Esophagus squamous epithelium (tissue), 5 donors: ENCODE measurements at regions of chr12 and their contacts with region 1.

Region 1: DNA sequence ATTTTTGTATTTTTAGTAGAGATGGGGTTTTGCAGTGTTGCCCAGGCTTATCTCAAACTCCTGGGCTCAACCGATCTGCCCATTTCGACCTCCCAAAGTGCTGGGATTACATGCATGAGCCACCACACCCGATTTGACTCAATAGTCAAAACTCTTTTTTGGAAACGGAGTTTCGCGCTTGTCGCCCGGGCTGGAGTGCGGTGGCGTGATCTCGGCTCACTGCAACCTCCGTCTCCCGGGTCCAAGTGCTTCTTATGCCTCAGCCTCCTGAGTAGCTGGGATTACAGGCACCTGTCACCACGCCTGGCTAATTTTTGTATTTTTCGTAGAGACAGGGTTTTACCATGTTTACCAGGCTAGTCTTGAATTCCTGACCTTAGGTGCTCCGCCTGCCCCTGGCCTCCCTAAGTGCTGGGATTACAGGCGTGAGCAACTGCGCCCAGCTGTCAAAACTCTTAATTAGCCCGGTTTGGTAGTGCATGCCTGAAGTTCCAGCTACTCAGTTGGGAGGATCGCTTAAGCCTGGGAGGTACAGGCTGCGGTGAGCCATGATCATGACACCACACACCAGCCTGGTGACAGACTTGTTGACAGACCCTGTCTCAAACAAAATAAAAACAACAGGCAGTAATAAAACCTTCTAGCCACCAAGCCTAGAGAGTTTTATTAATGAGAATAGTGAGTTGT is 12.4 kb downstream of the MED21 start:
- DNase-seq: no peak
- H3K4me3 ChIP-seq: no peak overlapping the region
- H3K27ac ChIP-seq: no peak overlapping the region
- H3K4me1 ChIP-seq: no peaks in the 10 kb centered on the region
- H3K27me3 ChIP-seq: no peaks in the 10 kb centered on the region
- CTCF ChIP-seq: no peak
- POLR2A ChIP-seq: no peak

Region 2: DNA sequence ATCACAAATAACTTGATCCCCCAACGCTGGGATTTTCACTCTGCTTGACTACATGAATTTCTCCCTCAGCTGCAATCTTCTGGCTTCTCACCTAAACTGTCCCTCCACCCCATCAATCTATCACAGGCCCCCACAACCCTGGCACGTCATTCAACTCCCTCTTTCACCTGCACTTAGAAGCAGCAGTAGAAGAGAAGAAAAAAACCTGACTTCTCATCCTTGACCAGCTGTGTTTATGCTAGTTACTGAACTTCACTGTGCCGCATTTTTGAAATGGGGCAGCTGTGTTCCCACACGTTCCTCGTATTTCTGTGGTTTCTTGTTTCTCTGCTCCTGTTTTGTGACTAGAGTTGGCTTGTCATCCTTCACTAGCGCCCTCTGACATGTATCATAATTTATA is 236.7 kb before region 1 on chr12:
- intact Hi-C with region 1: no loop called
- DNase-seq: no peak
- H3K4me3 ChIP-seq: no peak overlapping the region
- H3K27ac ChIP-seq: peak overlapping the region in 3 of 4 donors; percentile 17 to 20 (median 17)
- H3K4me1 ChIP-seq: peaks cover 0 to 32% (median 5%) of the 10 kb centered on the region in 3 donors
- H3K27me3 ChIP-seq: no peaks in the 10 kb centered on the region
- CTCF ChIP-seq: no peak
- POLR2A ChIP-seq: no peak

Region 3: GRCh38 chr12:26884765-26885576 is 149.8 kb before region 1 on chr12:
- intact Hi-C with region 1: no loop called
- DNase-seq: peak; percentile 15
- H3K4me3 ChIP-seq: peak overlapping the region in 1 of 4 donors; percentile 24
- H3K27ac ChIP-seq: peak overlapping the region in 1 of 4 donors; percentile 66
- H3K4me1 ChIP-seq: peaks cover 4 to 11% (median 4%) of the 10 kb centered on the region in 3 donors
- H3K27me3 ChIP-seq: no peaks in the 10 kb centered on the region
- CTCF ChIP-seq: peak; percentile 87 to 97 (median 96)
- POLR2A ChIP-seq: no peak

Region 4: DNA sequence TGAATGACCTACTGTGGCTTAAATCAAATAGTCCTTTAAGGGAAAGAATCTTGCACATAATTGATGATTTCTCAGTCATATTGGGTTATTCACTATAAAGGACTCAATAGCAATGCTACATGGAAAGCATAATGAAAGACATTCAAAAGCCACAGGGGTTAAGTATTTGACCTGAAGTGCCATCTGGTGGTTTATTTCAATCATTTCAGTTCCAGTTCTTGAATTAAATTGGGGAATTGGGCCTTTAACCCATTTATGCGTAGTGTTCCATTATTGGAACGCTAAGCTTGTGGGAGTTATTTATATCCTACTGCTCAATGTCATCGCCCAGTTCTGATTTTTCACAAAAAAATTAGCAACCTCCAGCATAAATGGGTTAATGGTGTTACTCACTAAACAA is 88.9 kb after region 1 on chr12:
- intact Hi-C with region 1: loop called (anchors 10 kb)
- DNase-seq: no peak
- H3K4me3 ChIP-seq: no peak overlapping the region
- H3K27ac ChIP-seq: no peak overlapping the region
- H3K4me1 ChIP-seq: peaks cover 0 to 11% (median 0%) of the 10 kb centered on the region in 3 donors
- H3K27me3 ChIP-seq: no peaks in the 10 kb centered on the region
- CTCF ChIP-seq: peak in 5 of 6 experiments; percentile 14 to 76 (median 52)
- POLR2A ChIP-seq: no peak

Region 5: DNA sequence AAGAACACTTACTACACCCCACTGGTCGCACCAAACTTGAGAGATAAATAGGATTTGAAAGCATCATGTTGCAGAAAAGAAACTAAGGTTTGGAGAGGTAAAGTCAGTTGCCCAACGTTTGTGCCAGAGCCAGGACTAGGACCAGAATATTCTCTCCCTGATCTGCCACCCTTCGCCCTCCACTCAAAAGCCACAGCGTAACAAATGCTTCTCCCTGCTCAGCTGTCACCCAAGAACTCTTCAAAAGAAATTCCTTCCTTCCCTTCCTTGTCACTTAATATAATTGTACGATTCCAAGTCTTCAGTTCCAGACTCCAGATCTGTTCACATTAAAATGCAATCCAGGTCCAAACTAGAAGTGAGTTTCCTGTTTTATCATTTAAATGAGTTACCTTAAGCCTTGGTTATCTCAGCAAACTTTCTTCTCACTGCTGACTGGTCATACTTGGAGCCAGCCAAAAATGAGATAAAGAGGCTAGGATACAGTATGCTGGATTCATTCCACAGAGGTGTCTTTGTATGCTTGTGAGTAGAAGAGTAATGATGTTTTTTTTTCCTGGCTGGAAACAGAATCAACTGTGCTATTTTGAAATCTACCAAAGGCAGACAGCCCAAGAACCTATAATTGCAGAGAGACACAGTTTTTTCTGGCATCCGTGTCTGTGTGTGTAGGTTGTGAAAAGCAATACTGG is 476.4 kb after region 1 on chr12:
- intact Hi-C with region 1: no loop called
- DNase-seq: no peak
- H3K4me3 ChIP-seq: no peak overlapping the region
- H3K27ac ChIP-seq: no peak overlapping the region
- H3K4me1 ChIP-seq: peaks cover 0 to 13% (median 3%) of the 10 kb centered on the region in 3 donors
- H3K27me3 ChIP-seq: no peaks in the 10 kb centered on the region
- CTCF ChIP-seq: no peak
- POLR2A ChIP-seq: no peak

Region 6: GRCh38 chr12:28586481-28586880 is 1551.7 kb after region 1 on chr12:
- intact Hi-C with region 1: no loop called
- DNase-seq: no peak
- H3K4me3 ChIP-seq: no peak overlapping the region
- H3K27ac ChIP-seq: no peak overlapping the region
- H3K4me1 ChIP-seq: no peaks in the 10 kb centered on the region
- H3K27me3 ChIP-seq: no peaks in the 10 kb centered on the region
- CTCF ChIP-seq: no peak
- POLR2A ChIP-seq: no peak